ENCODE measurements at regions of chr6 and their contacts with region 1.

Region 1: GRCh38 chr6:62039605-62040004 is 246.4 kb downstream of the KHDRBS2 start:
- DNase-seq: peak; percentile 35
- ATAC-seq: peak; percentile 31
- H3K4me3 ChIP-seq: peak overlapping the region in 2 of 5 experiments; percentile 7 to 17
- H3K4me3 Mint-ChIP-seq: peak overlapping the region; percentile 51
- H3K27ac ChIP-seq: peak overlapping the region in 1 of 2 donors; percentile 77
- H3K27ac Mint-ChIP-seq: peak overlapping the region; percentile 71
- H3K4me1 ChIP-seq: peaks cover 0 to 21% of the 10 kb centered on the region in 2 donors
- H3K4me1 Mint-ChIP-seq: peaks cover 25% of the 10 kb centered on the region
- H3K27me3 ChIP-seq: no peaks in the 10 kb centered on the region
- H3K27me3 Mint-ChIP-seq: no peaks in the 10 kb centered on the region
- CTCF ChIP-seq: no peak

Region 2: DNA sequence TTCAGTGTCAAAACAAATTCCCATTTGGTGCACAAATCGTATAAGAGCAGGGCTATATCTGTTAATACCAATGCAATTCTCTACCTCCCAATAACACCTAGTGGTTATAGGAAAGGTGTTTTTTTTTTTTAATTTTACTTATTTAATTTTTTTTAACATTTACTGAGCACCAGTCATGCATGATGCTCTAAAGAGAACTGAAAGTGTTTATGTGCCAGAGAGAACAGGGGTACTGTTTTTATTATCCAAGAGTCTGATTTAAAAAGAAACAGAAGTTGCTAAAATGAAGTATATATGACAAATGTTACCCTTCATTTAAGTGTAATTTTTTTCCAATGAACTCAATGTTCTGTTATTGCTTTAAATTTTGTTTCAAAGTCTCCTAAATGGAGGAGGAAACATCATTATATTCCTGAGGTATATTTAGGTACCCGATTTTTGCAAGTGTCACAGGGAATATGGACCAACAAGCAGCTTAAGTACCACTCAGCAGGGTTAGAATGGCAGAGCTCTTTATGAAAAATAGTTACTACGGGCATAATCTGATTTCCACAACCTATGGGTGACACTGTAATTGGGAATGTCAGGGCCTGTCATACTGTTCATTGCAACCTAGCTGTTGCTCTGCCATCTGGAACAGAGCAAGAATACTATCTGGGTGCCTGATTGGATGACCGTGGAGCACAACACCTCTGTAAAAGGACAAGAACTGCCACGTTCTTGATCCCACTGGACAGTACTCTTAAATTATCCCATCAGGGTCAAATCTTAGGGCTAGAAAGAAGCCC is 51.0 kb after region 1 on chr6:
- CTCF ChIA-PET with region 1: no interaction called
- POLR2A ChIA-PET with region 1: no interaction called
- intact Hi-C with region 1: loop called (anchors 10 kb)
- DNase-seq: peak; percentile 47
- ATAC-seq: peak; percentile 85
- H3K4me3 ChIP-seq: peak overlapping the region in 2 of 5 experiments; percentile 18 to 34
- H3K4me3 Mint-ChIP-seq: peak overlapping the region; percentile 82
- H3K27ac ChIP-seq: peak overlapping the region; percentile 67 to 91
- H3K27ac Mint-ChIP-seq: peak overlapping the region; percentile 94
- H3K4me1 ChIP-seq: peaks cover 25 to 49% of the 10 kb centered on the region in 2 donors
- H3K4me1 Mint-ChIP-seq: peaks cover 48% of the 10 kb centered on the region
- H3K27me3 ChIP-seq: no peaks in the 10 kb centered on the region
- H3K27me3 Mint-ChIP-seq: no peaks in the 10 kb centered on the region
- CTCF ChIP-seq: no peak

Region 3: DNA sequence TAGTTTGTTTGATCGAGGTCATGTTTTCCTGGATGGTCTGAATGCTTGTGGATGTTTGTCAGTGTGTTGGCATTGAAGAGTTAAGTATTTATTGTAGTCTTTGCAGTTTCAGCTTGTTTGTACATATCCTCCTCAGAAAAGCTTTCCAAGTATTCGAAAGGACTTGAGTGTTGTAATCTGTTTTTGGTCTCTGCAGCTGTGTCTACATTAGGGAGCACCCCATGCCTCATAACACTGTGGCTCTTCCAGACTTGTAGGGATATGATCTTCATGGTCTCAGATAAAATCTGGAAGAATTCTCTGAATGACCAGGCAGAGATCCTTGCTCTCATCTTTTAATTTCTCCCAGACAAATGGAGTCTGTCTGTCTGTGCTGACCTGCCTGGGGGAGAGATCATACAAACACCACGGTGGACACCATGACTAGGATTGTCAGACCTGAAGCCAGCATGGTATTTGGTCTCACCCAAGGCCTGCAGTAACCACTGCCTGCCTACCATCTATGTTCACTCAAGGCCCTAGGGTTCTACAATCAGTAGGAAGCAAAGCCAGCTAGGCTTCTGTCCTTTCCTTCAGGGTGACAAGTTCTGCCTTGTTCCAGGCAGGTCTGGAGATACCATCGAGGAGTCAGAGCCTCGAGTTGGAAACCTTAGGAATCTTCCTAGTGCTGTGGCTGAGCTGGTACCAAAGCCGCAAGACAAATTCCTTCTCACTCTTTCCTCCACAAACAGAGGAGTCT is 361.1 kb after region 1 on chr6:
- CTCF ChIA-PET with region 1: no interaction called
- POLR2A ChIA-PET with region 1: no interaction called
- intact Hi-C with region 1: no loop called
- DNase-seq: no peak
- ATAC-seq: no peak
- H3K4me3 ChIP-seq: no peak overlapping the region
- H3K4me3 Mint-ChIP-seq: no peak overlapping the region
- H3K27ac ChIP-seq: no peak overlapping the region
- H3K27ac Mint-ChIP-seq: no peak overlapping the region
- H3K4me1 ChIP-seq: no peaks in the 10 kb centered on the region
- H3K4me1 Mint-ChIP-seq: no peaks in the 10 kb centered on the region
- H3K27me3 ChIP-seq: no peaks in the 10 kb centered on the region
- H3K27me3 Mint-ChIP-seq: no peaks in the 10 kb centered on the region
- CTCF ChIP-seq: no peak

Measured in B cell (primary cell).